ENCODE measurements at regions of chrX and their contacts with region 1.

Region 1: DNA sequence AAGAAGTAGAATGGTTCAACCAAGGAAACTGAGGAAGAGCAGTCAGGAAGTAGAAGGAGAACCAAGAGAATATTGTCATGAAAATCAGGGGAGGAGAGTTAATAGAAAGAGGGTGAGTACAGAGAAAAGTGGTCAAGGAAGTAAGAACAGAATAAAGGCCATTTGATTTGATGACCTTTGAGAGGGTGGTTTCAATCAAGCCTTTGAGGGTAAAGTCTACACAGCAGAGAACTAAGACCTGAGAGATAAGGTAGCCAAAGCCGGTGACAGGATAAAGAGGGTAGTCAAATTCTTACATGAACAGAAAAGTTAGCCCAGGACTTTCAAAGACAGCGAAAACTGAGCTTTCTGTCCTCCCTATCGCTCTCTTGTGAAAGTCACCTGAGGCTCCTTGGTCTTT is 34.6 kb upstream of the FGF16 start:
- DNase-seq: no peak
- ATAC-seq: no peak

Region 2: DNA sequence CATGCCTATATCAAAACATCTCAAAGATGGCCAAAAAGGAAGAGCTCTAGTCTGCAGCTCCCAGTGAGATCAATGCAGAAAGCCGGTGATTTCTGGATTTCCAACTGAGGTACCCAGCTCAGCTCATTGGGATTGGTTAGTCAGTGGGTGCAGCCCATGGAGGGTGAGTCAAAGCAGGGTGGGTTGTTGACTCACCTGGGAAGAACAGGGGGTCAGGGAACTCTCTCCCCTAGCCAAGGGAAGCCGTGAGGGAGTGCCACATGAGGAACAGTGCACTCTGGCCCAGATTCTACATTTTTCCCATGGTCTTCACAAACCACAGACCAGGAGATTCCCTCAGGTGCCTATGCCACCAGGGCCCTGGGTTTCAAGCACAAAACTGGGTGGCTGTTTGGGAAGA is 22.7 kb before region 1 on chrX:
- intact Hi-C with region 1: no loop called
- DNase-seq: no peak
- ATAC-seq: no peak

Region 3: GRCh38 chrX:77776659-77777058 is 364.0 kb after region 1 on chrX:
- intact Hi-C with region 1: loop called (anchors 5 kb)
- DNase-seq: no peak
- ATAC-seq: no peak

Measured in sciatic nerve (tissue), 2 donors.